Dendritic cell treated with granulocyte-macrophage colony-stimulating factor and Interleukin-4, amounts not matched to agents 40 ng/mL and 50 ng/mL, for 4 days (primary cell): ENCODE measurements at regions of chr10 and their contacts with region 1.

Region 1: DNA sequence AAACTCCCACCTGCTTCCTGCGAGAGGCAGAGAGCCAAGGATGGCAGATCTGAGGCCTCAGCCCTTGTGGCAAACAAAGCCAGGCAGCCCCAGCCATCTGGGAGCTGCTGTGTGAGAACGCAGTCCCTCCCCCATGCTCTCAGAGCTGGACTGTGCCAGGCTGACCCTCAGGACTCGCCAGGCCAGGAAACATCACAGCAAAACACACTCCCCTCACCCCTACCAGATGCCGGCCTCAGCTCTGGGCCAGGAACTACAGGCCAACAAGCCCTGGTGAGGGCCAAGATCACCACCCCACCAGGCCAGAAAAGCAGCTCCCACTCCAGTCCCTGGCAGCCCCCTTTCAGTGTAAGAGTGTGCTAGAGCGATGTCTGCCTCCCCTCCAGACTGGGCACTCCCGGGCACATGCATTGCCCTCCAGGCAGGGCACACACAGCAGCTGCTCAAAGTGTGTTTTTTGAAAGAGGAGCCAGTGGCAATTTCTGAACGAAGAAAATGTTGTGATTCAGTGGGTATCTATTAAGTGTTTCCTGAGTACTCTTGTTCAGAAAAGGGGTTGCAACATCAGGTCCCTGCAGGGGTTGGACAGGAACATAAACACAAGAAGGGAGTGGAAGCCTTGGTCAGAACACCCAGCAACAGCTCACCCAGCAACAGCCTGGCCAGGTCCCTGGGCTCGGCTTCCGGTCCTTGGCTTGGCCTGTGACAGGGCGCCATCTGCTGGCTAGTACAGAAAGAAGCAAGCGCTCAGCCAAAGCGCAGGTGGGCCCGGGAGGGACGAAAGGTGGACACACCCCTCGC is 18.3 kb downstream of the LRRC20 start:
- H3K4me3 Mint-ChIP-seq: no peak overlapping the region
- H3K27ac Mint-ChIP-seq: no peak overlapping the region
- H3K4me1 Mint-ChIP-seq: peaks cover 41% of the 10 kb centered on the region
- H3K27me3 Mint-ChIP-seq: peaks cover 28% of the 10 kb centered on the region

Region 2: GRCh38 chr10:70221030-70221429 is 143.1 kb before region 1 on chr10:
- intact Hi-C with region 1: loop called (anchors 1 kb)
- H3K4me3 Mint-ChIP-seq: no peak overlapping the region
- H3K27ac Mint-ChIP-seq: no peak overlapping the region
- H3K4me1 Mint-ChIP-seq: peaks cover 8% of the 10 kb centered on the region
- H3K27me3 Mint-ChIP-seq: no peaks in the 10 kb centered on the region

Region 3: DNA sequence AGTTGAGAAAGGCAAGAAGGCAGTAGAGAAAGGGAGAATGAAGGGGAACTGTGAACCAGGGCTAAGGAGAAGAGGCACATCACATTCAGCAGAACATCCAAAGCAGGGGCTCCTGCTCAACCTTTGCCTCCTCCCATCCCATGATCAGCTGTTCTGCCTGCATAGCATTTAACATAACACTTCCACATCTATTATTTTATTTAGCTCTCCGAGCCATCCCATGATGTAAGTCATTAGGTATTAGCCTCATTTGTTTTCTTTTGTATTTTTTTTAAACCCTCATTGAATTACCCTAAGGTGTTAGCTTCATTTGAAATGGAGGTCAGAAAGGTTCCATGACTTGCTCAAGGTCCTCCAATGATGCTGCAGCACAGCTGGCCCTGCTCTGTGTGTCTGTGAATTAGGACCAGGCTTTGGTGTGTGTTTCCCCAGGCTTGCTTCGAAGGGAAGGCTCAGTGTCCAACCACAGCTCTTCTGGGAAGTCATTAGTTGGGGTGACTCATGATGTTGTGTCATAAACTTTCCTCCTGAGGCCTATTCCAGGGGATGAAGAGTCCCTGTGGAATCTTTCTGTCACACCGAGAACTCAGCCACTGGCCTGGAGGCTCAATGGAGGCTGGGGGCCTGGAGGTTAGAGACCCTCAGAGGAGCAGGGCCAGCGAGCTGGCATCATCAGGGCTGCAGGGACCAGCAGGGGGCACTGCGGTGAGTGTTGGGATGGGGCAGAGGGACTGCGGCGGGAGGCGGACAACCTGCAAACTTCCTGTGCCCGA is 96.8 kb before region 1 on chr10:
- intact Hi-C with region 1: loop called (anchors 5 kb)
- H3K4me3 Mint-ChIP-seq: peak overlapping the region; percentile 2
- H3K27ac Mint-ChIP-seq: no peak overlapping the region
- H3K4me1 Mint-ChIP-seq: peaks cover 26% of the 10 kb centered on the region
- H3K27me3 Mint-ChIP-seq: peaks cover 63% of the 10 kb centered on the region

Region 4: GRCh38 chr10:70405037-70405824 is 41.1 kb after region 1 on chr10:
- intact Hi-C with region 1: no loop called
- H3K4me3 Mint-ChIP-seq: peak overlapping the region; percentile 97
- H3K27ac Mint-ChIP-seq: peak overlapping the region; percentile 95
- H3K4me1 Mint-ChIP-seq: peaks cover 49% of the 10 kb centered on the region
- H3K27me3 Mint-ChIP-seq: no peaks in the 10 kb centered on the region